A673 (cell line): ENCODE measurements at regions of chr19 and their contacts with region 1.

Region 1: GRCh38 chr19:16771618-16772017 is 52.0 kb downstream of the NWD1 start:
- DNase-seq: peak; percentile 90
- H3K4me3 ChIP-seq: no peak overlapping the region
- H3K27ac ChIP-seq: no peak overlapping the region
- H3K4me1 ChIP-seq: no peaks in the 10 kb centered on the region
- H3K27me3 ChIP-seq: no peaks in the 10 kb centered on the region
- CTCF ChIP-seq: peak; percentile 84

Region 2: DNA sequence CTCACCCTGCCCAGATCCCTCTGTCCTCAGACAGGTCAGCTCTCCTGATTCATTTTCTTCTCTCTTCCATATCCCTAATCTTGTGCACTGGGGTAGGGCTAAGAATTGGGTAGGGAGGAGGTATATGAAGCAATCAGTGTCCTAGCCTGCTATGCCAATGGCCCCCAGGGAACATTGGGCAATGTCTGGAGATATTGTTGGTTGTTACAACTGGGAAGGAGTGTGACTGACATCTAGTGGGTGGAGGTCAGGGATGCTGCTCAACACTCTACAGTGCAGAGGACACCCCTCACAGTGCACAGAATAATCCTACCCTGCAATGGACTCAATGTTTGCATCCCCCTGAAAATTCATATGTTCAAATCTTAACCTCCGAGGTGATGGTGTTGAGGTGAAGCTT is 197.5 kb after region 1 on chr19:
- CTCF ChIA-PET with region 1: no interaction called
- POLR2A ChIA-PET with region 1: no interaction called
- intact Hi-C with region 1: loop called (anchors 1 kb)
- DNase-seq: peak; percentile 78
- H3K4me3 ChIP-seq: no peak overlapping the region
- H3K27ac ChIP-seq: no peak overlapping the region
- H3K4me1 ChIP-seq: no peaks in the 10 kb centered on the region
- H3K27me3 ChIP-seq: no peaks in the 10 kb centered on the region
- CTCF ChIP-seq: peak; percentile 55

Region 3: DNA sequence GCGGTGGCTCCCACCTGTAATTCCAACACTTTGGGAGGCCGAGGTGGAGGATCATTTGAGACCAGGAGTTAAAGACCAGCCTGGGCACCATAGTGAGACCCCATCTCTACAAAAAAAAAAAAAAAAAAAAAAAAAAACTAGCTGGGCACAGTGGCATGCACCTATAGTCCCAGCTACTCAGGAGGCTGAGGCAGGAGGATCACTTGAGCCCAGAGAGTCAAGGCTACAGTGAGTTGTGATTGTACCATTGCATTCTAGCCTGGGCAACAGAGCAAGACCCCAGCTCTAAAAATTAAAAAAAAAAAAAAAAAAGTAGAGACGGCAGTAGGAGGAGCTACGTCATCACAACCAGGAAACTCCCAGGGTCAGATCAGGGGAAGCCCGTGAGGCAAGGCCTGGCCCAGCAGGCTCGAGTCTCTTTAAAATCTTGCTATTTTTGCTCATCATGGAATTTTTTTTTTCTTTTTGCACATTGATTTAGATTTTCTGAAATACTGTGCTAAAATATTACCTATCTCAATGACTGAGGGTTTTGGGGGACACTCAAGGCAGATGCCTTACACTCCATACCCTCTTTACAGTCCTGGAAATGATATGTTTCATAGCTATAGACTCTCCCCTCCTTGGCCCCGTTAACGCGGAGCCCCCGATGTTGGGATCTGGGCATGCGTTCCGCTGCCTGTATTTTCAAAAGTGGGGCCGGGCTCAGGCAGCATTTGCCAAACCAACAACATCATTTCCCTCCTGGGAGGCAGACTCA is 399.1 kb after region 1 on chr19:
- CTCF ChIA-PET with region 1: no interaction called
- POLR2A ChIA-PET with region 1: no interaction called
- intact Hi-C with region 1: no loop called
- DNase-seq: no peak
- H3K4me3 ChIP-seq: no peak overlapping the region
- H3K27ac ChIP-seq: no peak overlapping the region
- H3K4me1 ChIP-seq: no peaks in the 10 kb centered on the region
- H3K27me3 ChIP-seq: no peaks in the 10 kb centered on the region
- CTCF ChIP-seq: no peak